ENCODE measurements at regions of chr18 and their contacts with region 1.

Region 1: DNA sequence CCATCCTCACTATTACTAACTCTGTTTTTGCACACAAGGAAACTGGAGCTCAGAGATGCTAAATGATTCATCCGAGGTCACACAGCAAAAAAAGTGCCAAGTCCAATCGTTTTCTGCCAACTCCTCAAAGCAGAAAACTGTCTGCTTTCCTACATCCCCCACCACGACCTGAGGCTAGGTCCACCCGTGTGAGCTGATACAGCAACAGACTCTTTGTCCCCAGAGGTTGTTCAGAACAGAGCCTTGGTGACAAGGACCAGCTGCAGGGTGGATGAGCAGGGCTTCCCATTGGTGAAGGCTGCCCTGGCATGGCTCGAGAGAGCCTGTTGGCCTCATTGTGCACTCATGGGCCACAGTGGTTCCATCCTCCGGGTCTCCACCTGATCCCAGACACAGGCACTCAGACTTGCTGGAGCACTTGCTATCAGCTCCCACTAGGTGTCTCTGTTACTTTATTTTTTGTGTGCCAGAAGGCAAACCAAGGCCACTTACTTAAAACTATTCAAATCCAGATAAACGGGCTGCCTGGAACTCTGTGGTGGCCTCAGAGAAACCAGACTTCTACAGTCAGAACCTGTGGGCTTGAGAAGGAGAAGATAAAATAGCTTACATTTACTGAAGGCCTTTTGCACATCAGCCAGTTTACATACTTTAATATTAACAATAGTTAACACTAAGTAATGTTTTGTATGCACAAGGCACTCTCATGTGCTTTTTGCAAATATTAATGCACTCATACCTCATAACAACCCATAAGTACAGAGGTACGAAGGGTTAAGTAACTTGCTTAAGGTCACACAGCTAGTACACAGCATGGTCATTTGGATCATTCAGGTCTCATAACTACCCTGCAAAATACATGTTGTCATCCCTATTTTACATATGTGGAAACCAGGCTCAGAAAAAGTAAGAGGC is 62.9 kb upstream of the CTIF start:
- DNase-seq: peak; percentile 46 to 52
- H3K4me3 ChIP-seq: no peak overlapping the region
- H3K27ac ChIP-seq: no peak overlapping the region
- H3K4me1 ChIP-seq: no peaks in the 10 kb centered on the region
- H3K27me3 ChIP-seq: no peaks in the 10 kb centered on the region
- CTCF ChIP-seq: peak; percentile 60 to 91 (median 89)
- POLR2A ChIP-seq: no peak

Region 2: GRCh38 chr18:48540251-48541025 is 64.5 kb after region 1 on chr18:
- intact Hi-C with region 1: loop called (anchors 10 kb)
- DNase-seq: peak; percentile 49 to 57
- H3K4me3 ChIP-seq: peak overlapping the region; percentile 66 to 90 (median 76)
- H3K27ac ChIP-seq: peak overlapping the region; percentile 45 to 85 (median 85)
- H3K4me1 ChIP-seq: peaks cover 9 to 12% of the 10 kb centered on the region in 2 donors
- H3K27me3 ChIP-seq: no peaks in the 10 kb centered on the region
- CTCF ChIP-seq: peak in 1 of 6 experiments; percentile 7
- POLR2A ChIP-seq: peak in 1 of 2 donors; percentile 3

Region 3: DNA sequence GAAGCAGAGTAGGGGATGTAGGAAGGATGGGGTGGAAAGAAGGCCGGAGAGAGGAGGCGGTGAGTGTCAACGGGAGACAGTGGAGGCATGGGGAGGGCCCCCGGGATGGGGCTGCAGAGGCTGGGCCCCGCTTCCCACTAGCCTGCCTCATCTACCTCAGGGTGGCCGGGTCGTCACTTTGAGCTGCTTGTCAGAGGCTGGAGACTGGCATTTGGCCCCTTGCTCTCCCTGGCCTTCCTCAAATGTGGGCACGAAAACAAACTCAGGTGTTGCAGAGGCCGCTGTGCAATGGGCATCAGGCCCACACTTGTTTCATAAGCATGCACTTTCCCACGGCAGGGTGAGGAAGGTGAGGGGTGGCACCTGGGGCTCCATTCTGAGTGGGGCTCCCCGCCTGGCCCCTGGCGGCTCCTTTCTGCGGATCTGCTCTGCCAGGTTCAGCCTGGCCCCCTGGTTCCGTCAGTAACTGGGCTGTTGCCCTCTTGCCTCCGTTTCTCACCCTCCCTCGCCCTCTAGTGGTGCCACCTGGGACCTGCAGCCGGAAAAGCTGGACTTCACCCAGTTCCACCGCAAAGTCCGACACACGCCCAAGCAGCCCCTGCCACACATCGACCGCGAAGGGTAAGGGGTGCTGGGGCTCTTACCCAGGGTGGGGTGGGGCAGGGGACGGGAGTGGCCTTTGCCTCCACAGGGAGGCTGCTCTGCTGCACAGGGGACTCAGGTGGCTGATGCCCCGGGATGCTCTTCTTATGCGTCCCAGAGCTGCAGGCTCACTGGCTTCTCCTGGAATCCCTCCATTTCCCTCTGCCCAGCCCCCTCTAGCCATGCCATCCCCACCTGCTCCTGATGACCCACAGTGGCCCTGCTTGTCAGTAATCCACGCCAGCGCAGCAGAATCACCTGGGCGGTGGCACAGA is 188.3 kb after region 1 on chr18:
- intact Hi-C with region 1: loop called (anchors 2 kb)
- DNase-seq: peak; percentile 72 to 77
- H3K4me3 ChIP-seq: no peak overlapping the region
- H3K27ac ChIP-seq: no peak overlapping the region
- H3K4me1 ChIP-seq: peaks cover 18 to 21% of the 10 kb centered on the region in 2 donors
- H3K27me3 ChIP-seq: no peaks in the 10 kb centered on the region
- CTCF ChIP-seq: peak; percentile 69 to 93 (median 86)
- POLR2A ChIP-seq: no peak

Measured in thyroid gland (tissue), 4 donors.